Activated naive CD4-positive, alpha-beta T cell treated with anti-CD3 and anti-CD28 coated beads for 36 hours (primary cell): ENCODE measurements at regions of chr22 and their contacts with region 1.

Region 1: GRCh38 chr22:40400159-40400558 is 29.8 kb downstream of the SGSM3 start:
- DNase-seq: peak; percentile 76
- H3K4me3 Mint-ChIP-seq: peak overlapping the region; percentile 8
- H3K27ac Mint-ChIP-seq: peak overlapping the region; percentile 68
- H3K4me1 Mint-ChIP-seq: peaks cover 73% of the 10 kb centered on the region
- H3K27me3 Mint-ChIP-seq: no peaks in the 10 kb centered on the region

Region 2: DNA sequence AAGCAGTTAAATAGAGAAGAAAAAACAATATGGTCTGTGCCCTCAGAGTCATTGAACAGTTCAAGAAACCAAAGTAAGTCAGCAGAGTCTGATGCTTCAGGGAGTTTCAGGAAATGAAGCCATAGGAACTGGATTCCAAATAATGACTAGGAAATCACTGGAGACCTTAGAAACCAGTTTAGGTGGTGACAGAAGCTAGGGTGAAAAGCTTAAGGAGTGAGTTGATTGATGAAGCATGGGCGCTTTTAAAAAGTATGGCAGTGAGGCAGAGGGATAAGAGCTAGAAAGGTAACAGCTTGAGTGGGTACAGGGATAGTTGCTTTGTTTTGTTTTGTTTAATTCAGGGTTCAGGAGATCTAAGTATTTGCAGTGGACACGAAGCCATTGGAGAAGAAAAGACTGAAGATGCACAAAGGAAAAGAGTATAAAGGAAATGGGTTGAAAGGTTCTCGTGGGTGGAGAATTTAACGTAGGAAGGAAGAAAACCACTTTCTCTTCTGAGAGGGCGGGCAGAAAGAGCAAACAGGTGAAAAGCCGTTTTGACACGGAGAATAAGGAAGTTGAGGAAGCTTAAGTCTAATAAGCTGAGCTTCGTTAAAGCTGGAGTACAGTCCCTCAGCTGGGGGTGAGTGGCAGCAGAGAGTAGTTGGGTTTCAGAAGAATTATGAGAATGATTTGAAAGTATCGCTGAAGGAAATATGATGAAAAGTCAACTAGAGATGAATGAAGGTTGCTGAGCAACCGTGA is 14.9 kb before region 1 on chr22:
- CTCF ChIA-PET with region 1: interaction called, 6 read pairs
- intact Hi-C with region 1: loop called (anchors 1 kb)
- DNase-seq: peak; percentile 72
- H3K4me3 Mint-ChIP-seq: peak overlapping the region; percentile 76
- H3K27ac Mint-ChIP-seq: peak overlapping the region; percentile 89
- H3K4me1 Mint-ChIP-seq: peaks cover 60% of the 10 kb centered on the region
- H3K27me3 Mint-ChIP-seq: no peaks in the 10 kb centered on the region